ENCODE measurements at regions of chr1 and their contacts with region 1.

Region 1: DNA sequence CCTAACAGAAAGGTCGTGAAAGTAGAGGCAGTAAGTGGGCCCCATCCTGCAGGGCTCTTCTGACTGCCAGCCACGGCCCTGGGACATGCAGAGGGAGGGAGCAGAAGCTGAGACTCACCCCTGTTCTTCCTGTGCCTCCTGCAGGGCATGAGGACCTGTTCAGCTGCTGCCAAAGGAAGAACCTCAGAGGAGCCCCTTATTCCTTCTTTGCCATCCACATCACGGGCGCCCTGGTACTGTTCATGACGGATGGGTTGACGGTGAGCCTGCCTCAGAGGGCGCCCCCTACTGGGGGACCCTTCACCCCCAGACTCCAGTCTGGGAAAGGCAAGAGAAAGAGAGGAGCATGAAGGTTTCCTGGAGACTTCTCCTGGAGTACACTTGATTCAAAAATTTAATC is 47.1 kb downstream of the ELK4 start:
- DNase-seq: no peak
- ATAC-seq: no peak
- H3K4me3 ChIP-seq: no peak overlapping the region
- H3K27ac ChIP-seq: no peak overlapping the region
- H3K4me1 ChIP-seq: peaks cover 51% of the 10 kb centered on the region
- H3K27me3 ChIP-seq: peaks cover 6 to 30% of the 10 kb centered on the region in 2 experiments; a peak in 4 of 5 replicates
- CTCF ChIP-seq: peak; percentile 44
- EP300 ChIP-seq: no peak
- POLR2A ChIP-seq: no peak
- RAD21 ChIP-seq: no peak

Region 2: DNA sequence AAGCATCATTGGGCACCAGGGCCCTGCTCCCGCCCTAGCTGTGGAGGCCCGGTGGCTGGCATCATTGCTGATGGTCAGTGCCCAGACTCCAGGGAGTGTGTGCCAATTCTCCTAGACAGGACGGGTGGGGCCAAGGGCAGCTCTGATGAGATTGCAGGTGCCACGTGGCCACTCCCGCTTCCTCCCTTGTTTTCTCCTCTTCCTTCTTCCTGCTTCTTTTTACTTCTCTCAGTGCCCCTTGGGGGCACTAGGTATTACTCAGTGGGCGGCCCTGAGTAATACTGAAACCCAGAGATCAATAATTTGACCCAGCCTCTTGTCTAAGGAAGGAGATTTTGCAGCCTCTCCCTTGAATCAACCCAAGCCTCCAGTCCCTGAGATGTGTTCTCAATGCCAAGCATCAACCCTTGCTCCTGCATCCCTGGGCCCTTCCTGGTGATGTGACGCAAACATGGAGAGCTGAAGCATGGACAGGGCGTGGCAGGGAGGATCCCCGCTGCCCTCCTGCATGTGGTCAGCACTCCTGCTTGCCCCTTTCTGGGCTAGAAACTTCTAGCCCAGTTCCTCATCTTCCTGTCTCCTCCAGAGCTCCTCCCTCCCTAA is 47.9 kb before region 1 on chr1:
- CTCF ChIA-PET with region 1: no interaction called
- POLR2A ChIA-PET with region 1: no interaction called
- in situ Hi-C with region 1: loop called (anchors 5 kb)
- intact Hi-C with region 1: no loop called
- DNase-seq: no peak
- ATAC-seq: no peak
- H3K4me3 ChIP-seq: no peak overlapping the region
- H3K27ac ChIP-seq: no peak overlapping the region
- H3K4me1 ChIP-seq: 0 out of 2 replicates have a peak, but pooled peaks cover 7% of the 10 kb centered on the region
- H3K27me3 ChIP-seq: peaks cover 5 to 27% of the 10 kb centered on the region in 2 experiments; a peak in 4 of 5 replicates
- CTCF ChIP-seq: no peak
- EP300 ChIP-seq: no peak
- POLR2A ChIP-seq: no peak
- RAD21 ChIP-seq: no peak

Measured in HepG2 (cell line).